CD4-positive, alpha-beta T cell (primary cell): ENCODE measurements at regions of chr18 and their contacts with region 1.

Region 1: DNA sequence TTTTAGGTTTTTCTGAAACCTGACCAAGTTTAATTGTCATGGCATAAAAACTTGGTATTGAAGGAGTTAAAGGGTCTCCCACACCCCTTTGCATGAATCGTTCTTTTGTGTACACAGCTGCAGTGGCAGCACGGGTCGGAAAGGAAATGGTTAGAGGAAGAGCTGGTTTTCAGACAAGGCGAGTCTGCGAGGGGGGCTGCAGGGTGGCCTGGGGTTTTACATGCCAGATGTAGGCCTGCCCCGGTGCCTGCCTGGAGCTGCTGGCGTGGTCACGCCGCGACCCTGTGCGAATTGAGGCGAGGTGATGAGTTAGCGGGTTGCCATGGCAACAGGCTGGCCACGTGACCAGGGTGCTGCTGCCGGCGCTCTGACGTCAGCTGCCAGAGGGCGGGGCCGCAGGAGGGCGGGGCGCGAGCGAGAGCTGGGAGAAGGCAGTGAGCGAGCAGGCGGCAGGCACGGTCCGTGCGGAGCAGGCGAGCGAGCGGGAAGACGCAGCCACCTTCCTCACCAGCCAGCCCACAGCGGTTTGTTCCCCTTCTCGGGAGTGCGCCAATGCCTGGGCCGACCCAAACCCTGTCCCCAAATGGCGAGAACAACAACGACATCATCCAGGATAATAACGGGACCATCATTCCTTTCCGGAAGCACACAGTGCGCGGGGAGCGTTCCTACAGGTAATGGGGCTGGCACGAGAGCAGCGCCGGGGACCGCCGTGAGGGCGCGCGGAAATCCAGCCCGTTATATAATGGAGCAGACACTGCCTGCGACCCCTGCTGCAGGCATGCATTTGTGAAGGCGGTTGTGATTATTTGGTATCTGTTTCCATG is at the start of gene MAPRE2:
- DNase-seq: peak; percentile 98 to 100 (median 99)
- ATAC-seq: peak; percentile 76
- H3K4me3 ChIP-seq: peak within 1 kb of the TSS; percentile 94
- H3K4me3 Mint-ChIP-seq: peak within 1 kb of the TSS; percentile 90
- H3K27ac ChIP-seq: peak within 1 kb of the TSS; percentile 89 to 91
- H3K27ac Mint-ChIP-seq: peak within 1 kb of the TSS; percentile 95
- H3K4me1 ChIP-seq: peaks cover 27% of the 10 kb centered on the region
- H3K4me1 Mint-ChIP-seq: peaks cover 58% of the 10 kb centered on the region
- H3K27me3 ChIP-seq: no peaks in the 10 kb centered on the region
- H3K27me3 Mint-ChIP-seq: no peaks in the 10 kb centered on the region
- CTCF ChIP-seq: no peak
- total RNA-seq, gene MAPRE2: 108 to 112 TPM

Region 2: DNA sequence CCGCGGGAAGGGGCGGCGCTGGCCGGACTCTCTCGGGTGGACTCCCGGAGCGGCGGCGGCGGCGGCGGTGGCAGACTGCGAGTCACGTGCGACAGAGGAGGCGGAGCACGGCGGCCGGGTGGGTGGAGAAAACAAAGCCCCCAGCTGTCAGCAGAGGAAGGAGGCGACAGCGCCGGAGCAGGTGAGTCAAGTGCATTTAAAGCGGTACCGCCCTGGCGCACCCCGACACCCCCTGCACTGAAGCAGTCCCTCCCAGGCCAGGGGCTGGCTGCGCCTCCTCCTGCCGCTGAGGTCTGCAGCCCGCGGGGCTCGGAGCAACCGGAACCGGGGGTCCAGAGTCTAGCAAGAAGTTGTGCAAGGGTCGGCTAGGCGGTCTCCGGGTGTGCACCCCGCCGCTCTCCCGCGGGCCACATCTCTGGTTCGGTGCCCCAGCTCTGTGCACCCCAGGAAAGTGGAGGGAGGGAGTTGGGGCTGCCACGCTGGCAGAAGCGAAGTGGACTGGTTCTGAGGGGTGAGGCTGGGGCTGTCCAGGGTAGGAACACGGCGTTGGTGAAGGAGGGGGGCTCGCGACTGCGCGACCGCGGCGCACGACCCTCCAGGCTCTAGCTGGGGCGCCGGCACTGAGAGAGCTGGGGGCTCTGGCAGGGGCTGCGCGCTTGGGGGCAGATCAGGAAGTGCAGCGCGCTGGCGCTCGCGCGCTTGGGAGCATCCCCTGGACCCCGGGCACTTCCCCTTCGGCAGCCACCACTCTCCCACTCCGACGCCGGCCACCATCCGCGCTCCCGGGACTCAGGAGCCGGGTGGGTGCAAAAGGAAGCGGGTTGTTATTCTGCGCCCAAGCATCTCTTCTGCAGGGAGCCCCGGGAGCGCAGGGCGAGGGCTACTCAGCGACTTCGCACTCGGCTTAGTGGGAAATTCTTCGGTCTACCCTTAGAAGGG is 64.0 kb before region 1 on chr18:
- CTCF ChIA-PET with region 1: interaction called, 3 read pairs
- POLR2A ChIA-PET with region 1: interaction called, 12 read pairs
- intact Hi-C with region 1: no loop called
- DNase-seq: peak; percentile 49 to 87 (median 75)
- ATAC-seq: peak; percentile 74
- H3K4me3 ChIP-seq: peak overlapping the region; percentile 97
- H3K4me3 Mint-ChIP-seq: peak overlapping the region; percentile 95
- H3K27ac ChIP-seq: no peak overlapping the region
- H3K27ac Mint-ChIP-seq: peak overlapping the region; percentile 39
- H3K4me1 ChIP-seq: peaks cover 35% of the 10 kb centered on the region
- H3K4me1 Mint-ChIP-seq: peaks cover 18% of the 10 kb centered on the region
- H3K27me3 ChIP-seq: peaks cover 0 to 5% of the 10 kb centered on the region in 2 experiments
- H3K27me3 Mint-ChIP-seq: peaks cover 9% of the 10 kb centered on the region
- CTCF ChIP-seq: no peak

Region 3: GRCh38 chr18:35085450-35086380 is 44.5 kb after region 1 on chr18:
- CTCF ChIA-PET with region 1: no interaction called
- POLR2A ChIA-PET with region 1: interaction called, 4 read pairs
- intact Hi-C with region 1: loop called in 1 of 2 experiments (anchors 5 kb)
- DNase-seq: no peak
- ATAC-seq: no peak
- H3K4me3 ChIP-seq: no peak overlapping the region
- H3K4me3 Mint-ChIP-seq: no peak overlapping the region
- H3K27ac ChIP-seq: no peak overlapping the region
- H3K27ac Mint-ChIP-seq: no peak overlapping the region
- H3K4me1 ChIP-seq: no peaks in the 10 kb centered on the region
- H3K4me1 Mint-ChIP-seq: peaks cover 65% of the 10 kb centered on the region
- H3K27me3 ChIP-seq: no peaks in the 10 kb centered on the region
- H3K27me3 Mint-ChIP-seq: no peaks in the 10 kb centered on the region
- CTCF ChIP-seq: no peak

Region 4: DNA sequence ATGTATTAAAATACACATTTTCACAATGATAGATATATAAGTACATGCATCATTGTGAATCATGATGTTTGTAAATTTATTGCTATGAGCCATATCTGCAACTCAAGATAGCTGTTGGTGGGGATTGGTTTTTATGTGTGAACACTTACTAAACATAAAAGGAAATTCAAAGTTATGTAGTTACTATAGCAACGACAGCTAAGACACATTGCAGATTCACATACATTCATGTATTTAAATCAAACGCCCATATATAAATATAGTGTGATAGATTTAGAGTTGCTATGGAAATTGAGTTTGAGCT is 65.6 kb after region 1 on chr18:
- CTCF ChIA-PET with region 1: interaction called, 5 read pairs
- POLR2A ChIA-PET with region 1: interaction called, 4 read pairs
- intact Hi-C with region 1: loop called in 1 of 2 experiments (anchors 5 kb)
- DNase-seq: peak in 3 of 14 experiments; percentile 43 to 52 (median 44)
- ATAC-seq: peak; percentile 72
- H3K4me3 ChIP-seq: no peak overlapping the region
- H3K4me3 Mint-ChIP-seq: peak overlapping the region; percentile 30
- H3K27ac ChIP-seq: peak overlapping the region in 1 of 2 donors; percentile 18
- H3K27ac Mint-ChIP-seq: peak overlapping the region; percentile 74
- H3K4me1 ChIP-seq: no peaks in the 10 kb centered on the region
- H3K4me1 Mint-ChIP-seq: peaks cover 10% of the 10 kb centered on the region
- H3K27me3 ChIP-seq: no peaks in the 10 kb centered on the region
- H3K27me3 Mint-ChIP-seq: no peaks in the 10 kb centered on the region
- CTCF ChIP-seq: no peak

Region 5: GRCh38 chr18:35240664-35241447 is 199.7 kb after region 1 on chr18 and contains the start of gene ZNF397:
- CTCF ChIA-PET with region 1: no interaction called
- POLR2A ChIA-PET with region 1: interaction called, 21 read pairs
- intact Hi-C with region 1: loop called in 1 of 2 experiments (anchors 2 kb)
- DNase-seq: peak; percentile 87 to 97 (median 94)
- ATAC-seq: peak; percentile 96
- H3K4me3 ChIP-seq: peak within 1 kb of the TSS; percentile 83
- H3K4me3 Mint-ChIP-seq: peak within 1 kb of the TSS; percentile 98
- H3K27ac ChIP-seq: peak within 1 kb of the TSS; percentile 90 to 94
- H3K27ac Mint-ChIP-seq: peak within 1 kb of the TSS; percentile 99
- H3K4me1 ChIP-seq: peaks cover 9% of the 10 kb centered on the region
- H3K4me1 Mint-ChIP-seq: peaks cover 37% of the 10 kb centered on the region
- H3K27me3 ChIP-seq: no peaks in the 10 kb centered on the region
- H3K27me3 Mint-ChIP-seq: no peaks in the 10 kb centered on the region
- CTCF ChIP-seq: no peak
- total RNA-seq, gene ZNF397: 7.6 to 10.0 TPM

Region 6: GRCh38 chr18:35290073-35290735 is 249.0 kb after region 1 on chr18 and contains the start of gene ZSCAN30:
- CTCF ChIA-PET with region 1: no interaction called
- POLR2A ChIA-PET with region 1: interaction called, 8 read pairs
- intact Hi-C with region 1: loop called in 1 of 2 experiments (anchors 5 kb)
- DNase-seq: peak; percentile 93 to 98 (median 96)
- ATAC-seq: peak; percentile 90
- H3K4me3 ChIP-seq: peak within 1 kb of the TSS; percentile 92
- H3K4me3 Mint-ChIP-seq: peak within 1 kb of the TSS; percentile 99
- H3K27ac ChIP-seq: peak within 1 kb of the TSS; percentile 55 to 87
- H3K27ac Mint-ChIP-seq: peak within 1 kb of the TSS; percentile 96
- H3K4me1 ChIP-seq: peaks cover 31% of the 10 kb centered on the region
- H3K4me1 Mint-ChIP-seq: peaks cover 78% of the 10 kb centered on the region
- H3K27me3 ChIP-seq: no peaks in the 10 kb centered on the region
- H3K27me3 Mint-ChIP-seq: no peaks in the 10 kb centered on the region
- CTCF ChIP-seq: no peak
- total RNA-seq, gene ZSCAN30: 9.6 to 11.6 TPM

Region 7: DNA sequence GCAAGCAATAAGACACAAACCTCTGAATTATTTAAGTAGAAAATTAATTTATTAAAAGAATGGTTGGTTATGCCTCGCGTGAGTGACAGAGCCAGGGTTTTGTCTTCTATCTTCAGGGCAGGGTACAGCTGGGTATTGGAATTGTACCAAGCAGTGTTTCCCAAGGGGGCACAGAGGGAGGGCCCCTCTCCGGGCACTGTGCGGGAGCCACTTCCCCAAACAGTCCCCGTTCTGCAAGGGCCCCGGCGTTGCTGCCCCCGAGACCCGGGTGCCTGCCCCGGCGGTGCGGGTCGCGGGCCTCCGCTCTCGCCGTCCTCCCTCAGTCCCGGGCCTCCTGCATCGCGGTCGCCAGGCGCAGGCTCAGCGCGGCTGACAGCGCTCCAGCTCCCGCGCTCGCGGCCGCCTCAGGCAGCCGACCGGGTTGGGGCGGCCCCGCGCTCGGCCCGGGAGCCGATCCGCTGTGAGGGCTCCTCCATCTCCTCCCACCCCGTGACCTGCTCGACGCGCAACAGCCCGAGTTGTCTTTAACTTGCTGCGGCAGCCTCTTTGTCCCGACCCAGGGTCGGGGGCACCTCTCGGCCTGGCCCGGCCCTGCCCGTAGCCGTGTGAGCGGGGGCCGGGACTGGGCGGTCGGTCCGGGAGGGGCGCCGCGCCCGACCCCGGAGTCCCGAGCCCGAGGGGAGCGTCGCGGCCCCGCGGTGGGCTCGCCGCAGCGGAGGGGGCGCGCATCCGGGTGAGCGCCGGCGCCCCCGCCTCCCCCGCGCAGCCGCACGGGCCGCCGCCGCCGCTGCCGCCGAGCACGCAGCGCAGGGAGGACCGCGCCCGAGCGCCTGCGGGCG is 539.7 kb after region 1 on chr18:
- CTCF ChIA-PET with region 1: no interaction called
- POLR2A ChIA-PET with region 1: interaction called, 3 read pairs
- intact Hi-C with region 1: loop called in 1 of 2 experiments (anchors 10 kb)
- DNase-seq: peak; percentile 21 to 84 (median 44)
- ATAC-seq: peak; percentile 75
- H3K4me3 ChIP-seq: peak overlapping the region; percentile 55
- H3K4me3 Mint-ChIP-seq: peak overlapping the region; percentile 63
- H3K27ac ChIP-seq: peak overlapping the region; percentile 26 to 42
- H3K27ac Mint-ChIP-seq: no peak overlapping the region
- H3K4me1 ChIP-seq: peaks cover 18% of the 10 kb centered on the region
- H3K4me1 Mint-ChIP-seq: peaks cover 35% of the 10 kb centered on the region
- H3K27me3 ChIP-seq: no peaks in the 10 kb centered on the region
- H3K27me3 Mint-ChIP-seq: peaks cover 13% of the 10 kb centered on the region
- CTCF ChIP-seq: no peak